G401 (cell line): ENCODE measurements at regions of chr7 and their contacts with region 1.

Region 1: GRCh38 chr7:32879460-32879859 is 12.1 kb downstream of the KBTBD2 start:
- DNase-seq: peak; percentile 19

Region 2: DNA sequence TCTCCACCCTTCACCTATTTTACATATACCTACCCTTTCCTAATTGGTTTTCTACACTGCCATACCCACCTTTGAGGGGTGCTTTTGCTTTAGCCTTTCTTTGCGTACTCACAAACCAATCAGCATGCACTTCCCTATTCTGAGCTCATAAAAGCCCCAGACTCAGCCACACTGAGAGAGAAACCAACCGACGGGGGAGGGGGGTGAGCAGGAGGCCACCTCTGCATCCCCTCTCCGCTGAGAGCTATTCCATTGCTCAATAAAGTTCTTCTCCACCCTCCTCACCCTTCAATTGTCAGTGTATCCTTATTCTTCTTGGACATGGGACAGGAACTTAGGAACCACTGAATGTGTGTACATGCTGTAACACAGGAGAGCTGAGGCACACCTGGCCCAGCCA is 68.7 kb after region 1 on chr7:
- in situ Hi-C with region 1: loop called (anchors 5 kb)
- DNase-seq: no peak

Region 3: GRCh38 chr7:32958046-32959025 is 78.9 kb after region 1 on chr7:
- in situ Hi-C with region 1: no loop called
- DNase-seq: no peak